ENCODE measurements at regions of chr10 and their contacts with region 1.

Region 1: GRCh38 chr10:27742195-27743011 is 3.2 kb downstream of the MKX start:
- DNase-seq: peak; percentile 72 to 87
- H3K4me3 ChIP-seq: peak overlapping the region; percentile 37 to 62
- H3K27ac ChIP-seq: peak overlapping the region; percentile 85 to 89
- H3K4me1 ChIP-seq: peaks cover 4 to 21% of the 10 kb centered on the region in 2 donors
- H3K27me3 ChIP-seq: peaks cover 17% of the 10 kb centered on the region in 2 donors
- CTCF ChIP-seq: peak; percentile 62 to 94 (median 82)
- POLR2A ChIP-seq: peak in 1 of 2 donors; percentile 20

Region 2: DNA sequence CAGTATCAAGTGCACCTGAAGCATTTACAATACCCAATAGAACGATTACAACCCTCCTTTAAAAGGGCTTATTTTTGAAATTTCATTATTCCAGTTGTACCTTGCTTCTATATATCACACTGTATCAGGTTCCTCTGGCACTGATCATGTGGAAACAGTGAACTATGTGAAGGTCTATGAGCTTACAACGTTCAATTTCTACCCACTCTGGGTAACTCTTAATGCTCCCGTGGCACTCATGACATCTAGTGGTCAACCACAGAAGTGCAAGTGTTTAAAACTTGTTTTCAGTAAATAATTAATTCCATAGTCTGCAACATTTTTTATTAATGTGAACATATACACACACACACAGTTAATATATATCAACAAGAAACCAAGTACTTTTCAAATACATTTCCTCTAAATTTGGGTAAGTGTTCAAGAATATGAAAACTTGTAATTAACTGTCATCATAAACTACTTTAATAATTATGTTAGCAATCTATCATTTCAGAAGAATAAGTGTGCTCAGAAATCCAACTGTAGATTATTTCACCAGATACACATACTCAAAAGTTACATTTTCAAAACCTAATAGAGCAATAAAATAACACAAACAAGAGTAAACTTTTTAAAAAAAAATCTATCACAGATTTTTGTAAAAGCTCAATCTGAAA is 499.5 kb after region 1 on chr10:
- intact Hi-C with region 1: loop called (anchors 5 kb)
- DNase-seq: peak in 1 of 2 donors; percentile 23
- H3K4me3 ChIP-seq: no peak overlapping the region
- H3K27ac ChIP-seq: no peak overlapping the region
- H3K4me1 ChIP-seq: no peaks in the 10 kb centered on the region
- H3K27me3 ChIP-seq: no peaks in the 10 kb centered on the region
- CTCF ChIP-seq: peak; percentile 82 to 96 (median 87)
- POLR2A ChIP-seq: no peak

Measured in uterus (tissue), 4 donors.